ENCODE measurements at regions of chr13 and their contacts with region 1.

Region 1: DNA sequence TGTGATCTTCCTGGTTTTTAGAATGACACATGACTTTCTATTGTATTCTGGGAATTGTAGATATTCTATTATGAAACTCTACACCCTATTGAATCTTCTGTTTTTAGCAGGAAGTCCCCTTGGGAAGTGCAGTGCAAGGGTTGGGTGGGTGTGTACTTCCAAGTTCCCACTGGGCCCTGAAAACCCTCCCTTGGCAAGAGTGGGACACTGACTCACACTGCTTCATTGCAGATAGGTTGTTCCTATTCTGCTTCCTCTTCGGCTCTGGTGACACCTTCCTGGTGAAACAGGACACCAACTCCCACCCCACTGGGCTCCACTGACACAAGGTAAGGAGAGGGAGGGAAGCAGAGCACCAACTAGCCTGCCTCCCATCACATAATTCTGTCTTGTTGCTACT is 121.8 kb downstream of the KCTD12 start:
- DNase-seq: no peak
- ATAC-seq: no peak
- H3K4me3 ChIP-seq: no peak overlapping the region
- H3K27ac ChIP-seq: no peak overlapping the region
- H3K4me1 ChIP-seq: no peaks in the 10 kb centered on the region
- H3K27me3 ChIP-seq: no peaks in the 10 kb centered on the region
- CTCF ChIP-seq: no peak
- EP300 ChIP-seq: no peak
- POLR2A ChIP-seq: no peak
- RAD21 ChIP-seq: no peak

Region 2: GRCh38 chr13:76732367-76732766 is 32.1 kb before region 1 on chr13:
- CTCF ChIA-PET with region 1: no interaction called
- POLR2A ChIA-PET with region 1: no interaction called
- RAD21 ChIA-PET with region 1: no interaction called
- SMC1A ChIA-PET with region 1: no interaction called
- in situ Hi-C with region 1: no loop called
- intact Hi-C with region 1: loop called (anchors 2 kb)
- DNase-seq: no peak
- ATAC-seq: no peak
- H3K4me3 ChIP-seq: no peak overlapping the region
- H3K27ac ChIP-seq: no peak overlapping the region
- H3K4me1 ChIP-seq: no peaks in the 10 kb centered on the region
- H3K27me3 ChIP-seq: no peaks in the 10 kb centered on the region
- CTCF ChIP-seq: no peak
- EP300 ChIP-seq: no peak
- POLR2A ChIP-seq: no peak
- RAD21 ChIP-seq: no peak

Measured in GM12878 (cell line).